Aorta (tissue), 5 donors: ENCODE measurements at regions of chr4 and their contacts with region 1.

Region 1: GRCh38 chr4:153127760-153128494 is 76.3 kb upstream of the TRIM2 start:
- DNase-seq: peak; percentile 87 to 91
- ATAC-seq: peak; percentile 92
- H3K4me3 ChIP-seq: peak overlapping the region in 1 of 2 donors; percentile 35
- H3K27ac ChIP-seq: no peak overlapping the region
- H3K4me1 ChIP-seq: no peaks in the 10 kb centered on the region
- H3K27me3 ChIP-seq: no peaks in the 10 kb centered on the region

Region 2: GRCh38 chr4:152779513-152780266 is 348.2 kb before region 1 on chr4 and contains the starts of genes ARFIP1 and TIGD4:
- intact Hi-C with region 1: loop called in 1 of 2 experiments (anchors 10 kb)
- DNase-seq: peak; percentile 99
- ATAC-seq: peak; percentile 100
- H3K4me3 ChIP-seq: peak within 1 kb of the TSS; percentile 81 to 85
- H3K27ac ChIP-seq: peak within 1 kb of the TSS in 1 of 2 donors; percentile 59
- H3K4me1 ChIP-seq: no peaks in the 10 kb centered on the region
- H3K27me3 ChIP-seq: no peaks in the 10 kb centered on the region
- total RNA-seq, gene ARFIP1: 28.9 to 30.4 TPM
- total RNA-seq, gene TIGD4: 0.30 to 0.32 TPM

Region 3: DNA sequence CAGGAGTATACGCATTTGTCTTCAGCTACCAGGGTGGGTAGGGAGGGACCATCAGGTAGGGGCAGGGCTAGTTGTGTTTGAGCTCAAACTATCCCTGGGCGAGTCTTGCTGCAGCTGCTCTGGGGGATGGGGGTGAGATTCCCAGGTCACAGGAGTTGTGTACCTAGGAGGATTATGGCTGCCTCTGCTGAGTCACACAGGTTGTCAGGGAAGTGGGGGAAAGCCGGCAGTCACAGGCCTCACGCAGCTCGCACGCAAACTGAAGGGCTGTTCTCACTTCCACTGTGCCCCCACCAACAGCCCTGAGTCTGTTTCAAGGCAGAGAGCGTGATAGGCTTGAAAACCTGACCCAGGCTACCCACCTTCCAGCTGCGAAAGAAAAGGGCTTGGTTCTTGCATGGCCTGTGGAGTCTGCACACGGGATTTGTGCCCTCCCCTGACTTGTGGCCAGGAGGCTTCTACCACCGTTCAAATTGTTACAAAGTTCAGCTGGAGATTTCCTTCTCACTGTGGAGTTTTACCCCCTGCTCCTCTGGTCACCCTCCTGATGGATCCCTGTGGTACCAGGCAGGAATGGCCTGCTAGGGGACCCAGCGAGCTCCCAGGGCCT is 284.3 kb before region 1 on chr4:
- intact Hi-C with region 1: loop called (anchors 5 kb)
- DNase-seq: no peak
- ATAC-seq: no peak
- H3K4me3 ChIP-seq: no peak overlapping the region
- H3K27ac ChIP-seq: no peak overlapping the region
- H3K4me1 ChIP-seq: no peaks in the 10 kb centered on the region
- H3K27me3 ChIP-seq: no peaks in the 10 kb centered on the region

Region 4: DNA sequence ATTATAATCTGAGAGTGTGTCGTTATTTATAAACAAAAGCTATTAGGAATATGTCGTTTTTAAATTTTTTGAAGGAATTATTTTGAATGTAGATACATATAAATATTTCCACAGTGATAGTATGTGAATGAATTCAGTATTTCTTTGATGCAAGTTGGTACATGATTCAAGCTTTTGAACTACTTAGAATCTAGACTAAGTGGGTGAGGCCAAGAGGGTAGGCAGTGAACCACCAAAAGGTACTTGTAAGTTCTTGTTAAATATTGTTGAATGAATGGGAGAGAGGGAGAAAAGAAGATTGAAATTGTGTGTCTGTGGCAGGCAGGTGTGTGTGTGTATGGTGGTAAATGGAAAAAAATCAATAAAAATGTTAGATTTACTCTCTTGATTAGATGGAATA is 278.6 kb before region 1 on chr4:
- intact Hi-C with region 1: loop called (anchors 5 kb)
- DNase-seq: no peak
- ATAC-seq: no peak
- H3K4me3 ChIP-seq: no peak overlapping the region
- H3K27ac ChIP-seq: no peak overlapping the region
- H3K4me1 ChIP-seq: no peaks in the 10 kb centered on the region
- H3K27me3 ChIP-seq: no peaks in the 10 kb centered on the region

Region 5: GRCh38 chr4:153083447-153083947 is 44.4 kb before region 1 on chr4:
- intact Hi-C with region 1: loop called (anchors 1 kb)
- DNase-seq: no peak
- ATAC-seq: peak; percentile 73
- H3K4me3 ChIP-seq: no peak overlapping the region
- H3K27ac ChIP-seq: no peak overlapping the region
- H3K4me1 ChIP-seq: no peaks in the 10 kb centered on the region
- H3K27me3 ChIP-seq: no peaks in the 10 kb centered on the region